ENCODE measurements at regions of chr1 and their contacts with region 1.

Region 1: DNA sequence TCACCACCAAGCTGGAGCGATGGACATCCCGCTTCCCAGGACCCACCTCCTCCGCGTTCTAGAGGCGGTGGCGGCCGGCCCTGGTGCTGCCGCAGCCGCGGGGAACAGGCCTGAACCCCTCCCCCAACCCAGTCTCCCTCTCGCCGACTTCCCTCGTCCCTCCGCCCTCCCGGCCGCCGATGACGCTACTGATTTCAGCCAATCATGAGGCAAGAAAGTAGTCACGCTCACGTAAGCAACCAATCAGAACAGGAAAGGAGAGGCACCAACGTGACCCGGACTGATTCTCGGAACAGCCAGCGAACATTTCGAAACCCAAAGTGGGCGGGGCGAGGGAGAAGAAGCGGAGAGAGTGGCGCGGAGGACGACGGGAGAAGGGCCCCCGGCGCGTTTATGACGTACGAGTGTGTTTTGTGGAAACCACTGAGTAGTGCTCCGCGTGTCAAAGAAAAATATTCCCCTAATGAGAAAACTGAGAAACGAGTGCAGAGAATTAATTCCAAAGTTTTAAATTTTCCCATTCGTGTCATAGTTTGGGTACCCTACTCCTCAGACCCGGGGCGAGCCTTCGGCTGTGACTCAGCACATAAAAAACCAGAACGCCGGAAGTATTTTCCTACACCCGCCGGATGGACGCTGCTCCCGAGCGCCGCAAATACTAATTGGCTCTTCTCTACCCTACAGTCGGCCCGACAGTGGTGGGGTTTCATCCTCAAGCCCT is at the start of gene NRDC:
- DNase-seq: peak; percentile 100
- ATAC-seq: peak; percentile 94
- H3K4me3 ChIP-seq: peak within 1 kb of the TSS; percentile 90
- H3K27ac ChIP-seq: peak within 1 kb of the TSS; percentile 99
- H3K4me1 ChIP-seq: peaks cover 5% of the 10 kb centered on the region
- H3K27me3 ChIP-seq: no peaks in the 10 kb centered on the region
- CTCF ChIP-seq: no peak
- EP300 ChIP-seq: peak in 1 of 2 experiments; percentile 68; a peak in 2 of 4 replicates
- POLR2A ChIP-seq: peak; percentile 95
- RAD21 ChIP-seq: no peak
- polyA plus RNA-seq, gene NRDC: 50.1 to 59.3 TPM

Region 2: GRCh38 chr1:51120629-51121028 is 758.1 kb before region 1 on chr1:
- CTCF ChIA-PET with region 1: no interaction called
- POLR2A ChIA-PET with region 1: no interaction called
- RAD21 ChIA-PET with region 1: no interaction called
- SMC1A ChIA-PET with region 1: no interaction called
- in situ Hi-C with region 1: no loop called
- intact Hi-C with region 1: no loop called
- DNase-seq: no peak
- ATAC-seq: no peak
- H3K4me3 ChIP-seq: no peak overlapping the region
- H3K27ac ChIP-seq: no peak overlapping the region
- H3K4me1 ChIP-seq: no peaks in the 10 kb centered on the region
- H3K27me3 ChIP-seq: no peaks in the 10 kb centered on the region
- CTCF ChIP-seq: no peak
- EP300 ChIP-seq: no peak
- POLR2A ChIP-seq: no peak
- RAD21 ChIP-seq: no peak

Region 3: GRCh38 chr1:51863384-51863783 is 15.4 kb before region 1 on chr1:
- CTCF ChIA-PET with region 1: interaction called, 5 read pairs
- POLR2A ChIA-PET with region 1: interaction called, 31 read pairs
- RAD21 ChIA-PET with region 1: interaction called, 6 read pairs
- SMC1A ChIA-PET with region 1: interaction called, 18 read pairs
- in situ Hi-C with region 1: no loop called
- intact Hi-C with region 1: no loop called
- DNase-seq: peak; percentile 32
- ATAC-seq: peak; percentile 79
- H3K4me3 ChIP-seq: no peak overlapping the region
- H3K27ac ChIP-seq: peak overlapping the region; percentile 51; the same call in 1 of the 2 replicates
- H3K4me1 ChIP-seq: peaks cover 10% of the 10 kb centered on the region
- H3K27me3 ChIP-seq: no peaks in the 10 kb centered on the region
- CTCF ChIP-seq: no peak
- EP300 ChIP-seq: peak; percentile 46 to 67; a peak in 1 of 4 replicates
- POLR2A ChIP-seq: no peak
- RAD21 ChIP-seq: no peak

Region 4: DNA sequence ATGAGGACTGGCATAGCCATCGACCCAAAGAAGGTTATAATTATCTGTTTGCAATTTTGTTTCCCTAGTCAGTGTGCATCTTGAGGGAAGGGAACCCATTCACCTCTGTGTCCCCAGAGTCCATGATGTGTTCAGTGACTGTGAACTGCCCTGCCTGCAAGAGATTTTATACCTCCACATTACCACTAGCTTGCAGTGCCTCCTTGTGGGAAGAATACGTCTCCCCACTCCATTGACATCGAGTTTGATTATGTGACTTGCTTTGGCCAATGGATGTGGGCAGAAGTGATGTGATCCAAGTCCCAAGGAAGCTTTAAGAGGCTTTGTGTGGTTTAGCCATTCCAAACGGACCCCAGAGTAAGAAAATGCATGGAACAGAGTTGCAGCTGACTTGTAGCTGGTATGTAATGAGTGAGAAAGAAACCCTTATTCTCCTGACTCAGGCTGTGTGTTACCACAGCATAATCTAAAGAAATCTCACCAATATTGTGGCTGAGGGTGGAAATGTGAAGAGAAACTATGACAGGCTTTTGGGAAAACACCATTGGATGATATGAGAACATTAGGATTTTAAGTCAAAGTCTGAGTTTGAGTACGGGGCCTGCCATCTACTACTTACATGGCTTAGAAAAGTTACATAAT is 47.5 kb after region 1 on chr1:
- CTCF ChIA-PET with region 1: no interaction called
- POLR2A ChIA-PET with region 1: no interaction called
- RAD21 ChIA-PET with region 1: no interaction called
- SMC1A ChIA-PET with region 1: no interaction called
- in situ Hi-C with region 1: no loop called
- intact Hi-C with region 1: no loop called
- DNase-seq: no peak
- ATAC-seq: peak; percentile 72
- H3K4me3 ChIP-seq: no peak overlapping the region
- H3K27ac ChIP-seq: no peak overlapping the region
- H3K4me1 ChIP-seq: no peaks in the 10 kb centered on the region
- H3K27me3 ChIP-seq: no peaks in the 10 kb centered on the region
- CTCF ChIP-seq: peak in 2 of 3 experiments; percentile 24 to 45; a peak in 3 of 6 replicates
- EP300 ChIP-seq: no peak
- POLR2A ChIP-seq: no peak
- RAD21 ChIP-seq: peak; percentile 50

Region 5: GRCh38 chr1:52045236-52045635 is 166.5 kb after region 1 on chr1:
- CTCF ChIA-PET with region 1: no interaction called
- POLR2A ChIA-PET with region 1: no interaction called
- RAD21 ChIA-PET with region 1: no interaction called
- SMC1A ChIA-PET with region 1: no interaction called
- in situ Hi-C with region 1: no loop called
- intact Hi-C with region 1: no loop called
- DNase-seq: no peak
- ATAC-seq: no peak
- H3K4me3 ChIP-seq: no peak overlapping the region
- H3K27ac ChIP-seq: no peak overlapping the region
- H3K4me1 ChIP-seq: no peaks in the 10 kb centered on the region
- H3K27me3 ChIP-seq: no peaks in the 10 kb centered on the region
- CTCF ChIP-seq: no peak
- EP300 ChIP-seq: no peak
- POLR2A ChIP-seq: no peak
- RAD21 ChIP-seq: no peak